Pancreas (tissue), 10 donors: ENCODE measurements at regions of chr1 and their contacts with region 1.

Region 1: DNA sequence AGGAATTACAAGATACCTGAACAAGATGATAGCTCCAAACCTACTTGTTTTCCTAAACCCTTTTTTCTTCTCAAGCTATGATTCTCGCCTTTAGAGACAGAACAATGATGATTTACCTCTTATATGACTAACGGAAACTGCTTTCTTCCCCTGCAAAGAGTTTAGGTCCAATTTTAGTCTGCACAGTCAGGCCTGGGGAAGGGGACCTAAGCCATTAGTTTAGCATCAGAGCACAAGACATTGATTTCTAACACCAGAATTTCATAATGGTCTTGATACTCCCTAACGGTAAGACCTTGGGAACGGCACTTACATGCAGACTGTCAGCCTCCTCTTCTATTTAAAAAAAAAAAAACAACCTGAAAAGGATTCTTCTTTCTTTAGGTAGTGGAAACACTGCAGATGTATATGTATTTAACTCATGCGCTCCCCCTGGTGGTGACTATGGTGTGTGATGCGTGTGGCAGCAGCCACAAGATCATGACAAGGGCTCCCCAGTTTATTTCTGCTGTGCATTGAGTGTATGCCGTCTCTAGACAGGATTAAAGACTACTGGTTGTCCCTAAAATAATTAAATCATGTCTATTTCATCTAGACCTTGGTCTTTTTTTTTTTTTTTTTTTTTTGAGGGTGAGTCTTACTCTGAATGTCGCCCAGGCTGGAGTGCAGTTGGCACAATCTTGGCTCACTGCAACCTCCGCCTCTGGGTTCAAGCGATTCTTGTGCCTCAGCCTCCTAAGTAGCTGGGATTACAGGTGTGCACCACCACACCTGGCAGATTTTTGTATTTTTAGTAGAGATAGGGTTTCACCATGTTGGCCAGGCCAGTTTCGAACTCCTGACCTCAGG is 37.3 kb upstream of the TMEM222 start:
- DNase-seq: peak; percentile 66 to 92 (median 82)
- ATAC-seq: peak; percentile 83 to 97 (median 96)
- H3K4me3 ChIP-seq: no peak overlapping the region
- H3K27ac ChIP-seq: no peak overlapping the region
- H3K4me1 ChIP-seq: no peaks in the 10 kb centered on the region
- H3K27me3 ChIP-seq: no peaks in the 10 kb centered on the region
- CTCF ChIP-seq: peak; percentile 75 to 88 (median 82)

Region 2: DNA sequence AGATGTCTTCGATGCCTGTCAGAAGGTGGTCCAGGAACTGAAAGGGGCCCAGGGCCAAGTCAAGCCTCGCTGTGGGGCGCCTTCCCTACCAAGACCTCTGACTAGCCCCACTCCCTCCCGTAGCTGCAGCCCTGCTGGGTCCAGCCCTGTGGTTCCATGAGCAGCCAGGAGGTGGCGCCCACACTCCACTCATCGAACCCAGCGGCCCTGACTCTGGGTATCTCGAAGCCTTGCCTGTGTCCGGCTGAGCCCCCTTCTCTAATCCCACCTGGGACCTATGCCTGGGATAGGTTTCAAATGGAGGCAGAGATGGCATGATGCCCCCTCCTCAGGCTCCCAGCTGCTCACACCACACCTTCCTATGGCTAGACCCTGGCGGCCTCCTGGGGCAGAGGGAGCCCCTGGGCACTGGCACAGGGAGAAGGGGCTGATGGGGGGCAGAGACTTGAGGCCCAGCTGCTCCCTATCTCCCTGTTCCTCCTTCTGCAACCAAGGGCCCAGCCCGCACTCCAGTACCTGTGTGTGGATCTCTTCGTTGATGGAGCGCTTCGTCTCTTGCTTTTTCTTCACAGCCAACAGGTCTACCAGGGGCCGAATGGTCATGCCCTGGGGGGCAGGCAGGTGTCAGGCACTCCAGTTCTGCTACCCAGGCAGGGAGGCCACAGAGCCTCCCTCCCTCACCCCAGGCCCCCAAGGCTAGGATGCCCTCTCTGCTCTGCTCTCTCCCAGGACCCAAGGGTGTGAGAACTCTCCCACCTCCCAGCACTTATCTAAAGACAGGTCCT is 181.8 kb before region 1 on chr1:
- intact Hi-C with region 1: loop called in 2 of 3 experiments (anchors 5 kb)
- DNase-seq: peak in 5 of 6 donors; percentile 57 to 94 (median 82)
- ATAC-seq: peak; percentile 76 to 89 (median 82)
- H3K4me3 ChIP-seq: no peak overlapping the region
- H3K27ac ChIP-seq: no peak overlapping the region
- H3K4me1 ChIP-seq: no peaks in the 10 kb centered on the region
- H3K27me3 ChIP-seq: no peaks in the 10 kb centered on the region
- CTCF ChIP-seq: peak; percentile 95 to 96 (median 96)

Region 3: DNA sequence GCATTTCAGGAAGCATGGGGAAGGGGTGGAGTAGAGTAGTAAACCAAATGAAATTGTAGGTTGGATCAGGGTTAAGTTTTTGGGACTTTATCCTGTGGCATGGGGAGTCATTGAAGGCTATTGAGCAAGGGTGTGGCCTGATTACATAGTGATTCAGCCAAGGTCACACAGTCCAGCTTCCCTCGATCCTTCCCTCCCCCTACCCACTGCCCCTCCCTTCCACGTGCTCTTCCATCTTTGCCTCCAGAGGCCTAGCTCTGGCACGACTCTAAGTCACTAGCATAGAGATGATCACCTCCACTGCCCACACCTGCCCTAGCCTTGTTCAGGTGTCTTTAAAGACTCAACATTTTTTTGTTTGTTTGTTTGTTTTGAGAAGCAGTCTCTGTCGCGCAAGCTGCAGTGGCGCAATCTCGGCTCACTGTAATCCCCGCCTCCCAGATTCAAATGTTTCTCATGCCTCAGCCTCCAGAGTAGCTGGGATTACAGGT is 92.6 kb before region 1 on chr1:
- intact Hi-C with region 1: loop called in 1 of 3 experiments (anchors 10 kb)
- DNase-seq: no peak
- ATAC-seq: peak in 3 of 4 donors; percentile 70 to 72 (median 71)
- H3K4me3 ChIP-seq: no peak overlapping the region
- H3K27ac ChIP-seq: no peak overlapping the region
- H3K4me1 ChIP-seq: no peaks in the 10 kb centered on the region
- H3K27me3 ChIP-seq: no peaks in the 10 kb centered on the region
- CTCF ChIP-seq: no peak